HepG2 (cell line): ENCODE measurements at regions of chr1 and their contacts with region 1.

Region 1: GRCh38 chr1:5745776-5746610 is 246.2 kb downstream of the NPHP4 start:
- DNase-seq: peak; percentile 52
- ATAC-seq: peak; percentile 91
- H3K4me3 ChIP-seq: no peak overlapping the region
- H3K27ac ChIP-seq: no peak overlapping the region
- H3K4me1 ChIP-seq: peaks cover 8% of the 10 kb centered on the region; the same call in 1 of the 2 replicates
- H3K27me3 ChIP-seq: peaks cover 3 to 65% of the 10 kb centered on the region in 2 experiments; a peak in 4 of 5 replicates
- CTCF ChIP-seq: peak; percentile 97
- EP300 ChIP-seq: no peak
- POLR2A ChIP-seq: no peak
- RAD21 ChIP-seq: peak; percentile 71

Region 2: DNA sequence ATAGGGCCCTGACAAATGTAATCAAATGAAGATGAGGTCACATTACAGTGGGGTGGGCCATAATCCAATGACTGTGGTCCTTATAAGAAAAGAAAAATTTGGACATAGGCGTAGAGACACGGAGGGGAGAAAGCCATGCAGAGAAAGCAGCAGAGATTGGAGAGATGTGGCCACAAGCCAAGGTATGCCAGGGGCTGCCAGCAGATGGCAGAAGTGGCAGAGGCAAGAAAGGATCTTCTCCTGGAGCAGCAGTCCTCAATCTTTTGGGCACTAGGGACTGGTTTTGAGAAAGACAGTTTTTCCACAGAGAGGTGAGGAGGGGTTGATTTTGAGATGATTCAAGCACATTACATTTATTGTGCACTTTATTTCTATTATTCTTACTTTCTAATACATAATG is 108.8 kb before region 1 on chr1:
- CTCF ChIA-PET with region 1: interaction called, 3 read pairs
- POLR2A ChIA-PET with region 1: no interaction called
- in situ Hi-C with region 1: no loop called
- intact Hi-C with region 1: loop called (anchors 5 kb)
- DNase-seq: no peak
- ATAC-seq: no peak
- H3K4me3 ChIP-seq: no peak overlapping the region
- H3K27ac ChIP-seq: no peak overlapping the region
- H3K4me1 ChIP-seq: no peaks in the 10 kb centered on the region
- H3K27me3 ChIP-seq: peaks cover 0 to 5% of the 10 kb centered on the region in 2 experiments; a peak in 1 of 5 replicates
- CTCF ChIP-seq: peak; percentile 43
- EP300 ChIP-seq: no peak
- POLR2A ChIP-seq: no peak
- RAD21 ChIP-seq: no peak